ENCODE measurements at regions of chr6 and their contacts with region 1.

Region 1: DNA sequence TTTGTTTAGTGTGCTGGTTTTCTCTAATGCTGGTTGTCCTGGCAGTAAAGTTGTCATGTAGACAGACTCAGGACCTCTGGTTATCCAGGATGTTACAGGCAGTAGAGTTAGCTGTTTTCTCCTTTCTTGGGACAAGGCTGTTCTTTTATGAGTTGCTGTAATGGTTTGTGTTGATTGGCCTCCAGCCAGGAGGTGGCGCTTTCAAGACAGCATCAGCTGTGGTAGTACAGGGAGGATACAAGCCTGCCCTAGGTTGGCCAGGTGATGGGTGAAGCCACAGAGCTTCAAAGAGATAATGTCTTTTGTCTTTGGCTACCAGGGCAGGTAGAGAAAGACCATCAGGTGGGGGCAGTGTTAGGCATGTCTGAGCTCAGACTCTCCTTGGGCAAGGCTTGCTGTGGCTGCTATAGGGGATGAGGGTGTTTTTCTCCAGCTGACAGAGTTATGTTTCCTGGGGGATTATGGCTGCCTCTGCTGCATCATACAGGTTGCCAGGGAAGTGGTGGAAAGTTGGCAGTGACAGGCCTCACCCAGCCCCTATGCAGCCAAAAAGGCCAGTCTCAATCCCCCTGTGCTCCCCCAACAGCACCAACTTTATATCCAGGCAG is 127.2 kb upstream of the TAB2 start:
- DNase-seq: no peak
- ATAC-seq: peak; percentile 95
- H3K4me3 ChIP-seq: no peak overlapping the region
- H3K27ac ChIP-seq: no peak overlapping the region
- H3K4me1 ChIP-seq: peaks cover 5% of the 10 kb centered on the region
- H3K27me3 ChIP-seq: no peaks in the 10 kb centered on the region
- CTCF ChIP-seq: peak; percentile 39 to 57 (median 51)
- EP300 ChIP-seq: no peak
- POLR2A ChIP-seq: no peak
- RAD21 ChIP-seq: peak; percentile 61

Region 2: DNA sequence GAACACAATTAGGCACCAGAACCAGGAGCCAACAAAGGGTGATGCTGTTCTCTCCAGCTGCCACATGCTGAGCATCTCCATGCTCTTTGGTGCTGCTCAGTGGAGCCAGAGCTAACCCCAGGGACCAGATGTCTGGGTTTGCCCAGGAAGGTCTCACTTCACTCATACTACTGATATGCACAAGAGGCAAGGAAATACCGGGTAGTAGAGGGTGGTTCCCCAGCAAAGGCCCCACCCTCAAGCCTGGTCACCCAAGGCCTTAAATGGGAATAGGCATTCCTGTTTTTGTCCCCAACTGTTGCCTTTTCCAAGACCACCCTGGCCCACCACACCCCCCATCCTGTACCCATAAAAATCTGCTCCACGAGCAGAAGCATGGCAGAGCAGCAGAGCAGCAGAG is 77.4 kb before region 1 on chr6:
- CTCF ChIA-PET with region 1: interaction called, 6 read pairs
- POLR2A ChIA-PET with region 1: no interaction called
- RAD21 ChIA-PET with region 1: interaction called, 8 read pairs
- SMC1A ChIA-PET with region 1: interaction called, 10 read pairs
- in situ Hi-C with region 1: no loop called
- intact Hi-C with region 1: no loop called
- DNase-seq: no peak
- ATAC-seq: peak; percentile 82
- H3K4me3 ChIP-seq: no peak overlapping the region
- H3K27ac ChIP-seq: peak overlapping the region; percentile 74
- H3K4me1 ChIP-seq: peaks cover 50% of the 10 kb centered on the region
- H3K27me3 ChIP-seq: no peaks in the 10 kb centered on the region
- CTCF ChIP-seq: no peak
- EP300 ChIP-seq: no peak
- POLR2A ChIP-seq: no peak
- RAD21 ChIP-seq: no peak

Region 3: DNA sequence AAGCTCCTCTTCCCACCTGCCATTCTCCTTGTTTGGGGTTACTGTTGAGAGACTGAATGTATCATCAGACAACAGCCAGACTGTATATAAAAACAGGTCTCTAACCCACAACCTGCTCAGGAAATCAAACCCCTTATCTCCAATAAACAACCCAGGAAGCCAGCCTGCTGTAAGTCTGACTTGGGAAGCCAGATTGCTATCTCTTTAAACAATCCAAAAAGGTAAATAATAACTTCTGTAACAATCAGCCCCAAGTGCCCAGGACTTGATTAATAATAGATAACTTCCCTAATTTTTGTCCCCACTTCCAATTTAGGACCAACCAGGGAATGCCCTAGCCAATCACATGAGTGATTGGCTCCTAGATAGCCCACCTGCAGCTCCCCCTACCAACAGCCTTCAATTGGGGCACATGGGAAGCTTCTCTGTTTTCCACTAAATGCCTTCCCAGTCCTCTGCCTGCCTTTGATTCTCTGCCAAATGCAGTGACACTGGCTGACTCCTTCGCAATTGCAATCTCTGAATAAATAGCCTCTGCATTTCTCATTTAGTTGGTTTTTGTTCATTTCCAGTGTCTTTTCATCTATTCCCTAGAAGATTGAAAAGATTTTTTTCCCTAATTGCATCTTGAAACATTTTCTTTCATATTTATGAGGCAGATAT is 10.1 kb after region 1 on chr6:
- CTCF ChIA-PET with region 1: interaction called, 12 read pairs
- POLR2A ChIA-PET with region 1: no interaction called
- RAD21 ChIA-PET with region 1: interaction called, 3 read pairs
- SMC1A ChIA-PET with region 1: interaction called, 9 read pairs
- in situ Hi-C with region 1: no loop called
- intact Hi-C with region 1: no loop called
- DNase-seq: no peak
- ATAC-seq: no peak
- H3K4me3 ChIP-seq: no peak overlapping the region
- H3K27ac ChIP-seq: no peak overlapping the region
- H3K4me1 ChIP-seq: no peaks in the 10 kb centered on the region
- H3K27me3 ChIP-seq: no peaks in the 10 kb centered on the region
- CTCF ChIP-seq: no peak
- EP300 ChIP-seq: no peak
- POLR2A ChIP-seq: no peak
- RAD21 ChIP-seq: no peak

Region 4: GRCh38 chr6:149235130-149235561 is 44.8 kb after region 1 on chr6:
- CTCF ChIA-PET with region 1: interaction called, 3 read pairs
- POLR2A ChIA-PET with region 1: no interaction called
- RAD21 ChIA-PET with region 1: interaction called, 10 read pairs
- SMC1A ChIA-PET with region 1: interaction called, 12 read pairs
- in situ Hi-C with region 1: no loop called
- intact Hi-C with region 1: no loop called
- DNase-seq: peak; percentile 69
- ATAC-seq: peak; percentile 91
- H3K4me3 ChIP-seq: no peak overlapping the region
- H3K27ac ChIP-seq: peak overlapping the region; percentile 73
- H3K4me1 ChIP-seq: peaks cover 37% of the 10 kb centered on the region
- H3K27me3 ChIP-seq: no peaks in the 10 kb centered on the region
- CTCF ChIP-seq: no peak
- EP300 ChIP-seq: peak; percentile 37 to 71; a peak in 2 of 4 replicates
- POLR2A ChIP-seq: no peak
- RAD21 ChIP-seq: no peak

Region 5: DNA sequence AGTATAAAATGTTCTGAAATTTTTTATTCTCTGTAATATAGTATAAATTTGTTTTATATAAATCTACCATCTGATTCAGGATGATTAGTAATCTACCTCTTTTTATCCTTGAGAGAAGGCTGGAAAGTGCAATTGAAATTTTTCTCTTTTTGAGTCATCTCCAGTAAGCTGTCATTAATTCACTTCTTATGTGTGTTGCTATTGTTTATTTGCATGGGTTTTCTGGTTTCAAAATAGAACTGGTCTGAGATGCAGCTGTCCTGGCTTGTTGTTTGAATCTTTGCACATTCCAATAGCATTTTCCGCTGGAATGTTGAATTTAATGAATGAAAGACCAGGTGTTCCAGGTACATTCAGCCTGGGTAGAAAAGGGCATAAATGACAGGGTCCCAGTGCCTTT is 102.9 kb after region 1 on chr6:
- CTCF ChIA-PET with region 1: interaction called, 3 read pairs
- POLR2A ChIA-PET with region 1: no interaction called
- RAD21 ChIA-PET with region 1: no interaction called
- SMC1A ChIA-PET with region 1: interaction called, 13 read pairs
- in situ Hi-C with region 1: no loop called
- intact Hi-C with region 1: no loop called
- DNase-seq: no peak
- ATAC-seq: peak; percentile 65; the same call in 2 of the 3 replicates
- H3K4me3 ChIP-seq: no peak overlapping the region
- H3K27ac ChIP-seq: no peak overlapping the region
- H3K4me1 ChIP-seq: no peaks in the 10 kb centered on the region
- H3K27me3 ChIP-seq: no peaks in the 10 kb centered on the region
- CTCF ChIP-seq: no peak
- EP300 ChIP-seq: no peak
- POLR2A ChIP-seq: no peak
- RAD21 ChIP-seq: no peak

Region 6: DNA sequence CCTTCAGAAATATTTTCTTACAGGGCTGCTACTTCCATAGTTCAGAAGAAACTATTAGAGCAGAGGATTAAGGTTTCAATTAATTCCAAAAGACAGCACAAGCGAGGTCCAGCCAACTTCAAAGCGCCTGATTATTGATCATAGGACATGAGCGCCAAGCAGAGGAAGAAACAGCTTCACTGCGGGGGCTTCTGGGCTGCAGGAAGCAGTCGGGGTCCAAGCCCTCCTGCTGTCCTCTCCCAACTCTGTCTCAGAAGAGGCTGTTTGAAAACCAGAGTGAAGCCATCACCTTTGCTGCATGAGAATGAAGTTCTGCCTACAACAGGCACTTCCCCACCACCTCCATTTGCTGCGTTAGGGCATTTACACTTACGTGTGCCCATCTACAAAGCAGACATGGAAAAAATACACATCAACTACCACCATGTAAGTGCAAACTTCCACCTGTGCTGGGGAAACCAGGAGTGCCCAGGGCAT is 233.7 kb after region 1 on chr6:
- CTCF ChIA-PET with region 1: interaction called, 14 read pairs
- POLR2A ChIA-PET with region 1: no interaction called
- RAD21 ChIA-PET with region 1: interaction called, 8 read pairs
- SMC1A ChIA-PET with region 1: interaction called, 18 read pairs
- in situ Hi-C with region 1: no loop called
- intact Hi-C with region 1: no loop called
- DNase-seq: no peak
- ATAC-seq: no peak
- H3K4me3 ChIP-seq: no peak overlapping the region
- H3K27ac ChIP-seq: no peak overlapping the region
- H3K4me1 ChIP-seq: peaks cover 11% of the 10 kb centered on the region
- H3K27me3 ChIP-seq: no peaks in the 10 kb centered on the region; a peak in 1 of 4 replicates
- CTCF ChIP-seq: no peak
- EP300 ChIP-seq: no peak
- POLR2A ChIP-seq: no peak
- RAD21 ChIP-seq: no peak

Region 7: DNA sequence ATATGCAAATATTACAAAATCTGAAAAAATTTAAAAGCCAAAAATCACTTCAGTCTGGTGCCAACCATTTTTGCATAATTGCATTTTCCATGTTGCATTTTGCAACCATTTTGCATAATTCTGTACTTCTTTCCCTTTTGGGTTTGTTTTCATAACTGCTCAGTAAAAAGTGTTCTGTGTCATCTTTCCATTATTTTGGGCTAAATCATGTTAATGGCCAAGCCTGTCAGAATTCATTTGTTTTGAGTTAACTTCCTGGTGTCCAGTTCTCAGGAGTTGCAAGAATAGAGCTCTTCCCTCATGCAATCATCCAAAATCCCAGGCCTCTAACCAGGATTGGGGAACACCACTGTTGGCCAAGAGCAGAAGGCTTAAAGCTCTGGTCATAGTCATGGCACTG is 1808.8 kb after region 1 on chr6:
- CTCF ChIA-PET with region 1: no interaction called
- POLR2A ChIA-PET with region 1: no interaction called
- RAD21 ChIA-PET with region 1: no interaction called
- SMC1A ChIA-PET with region 1: no interaction called
- in situ Hi-C with region 1: no loop called
- intact Hi-C with region 1: no loop called
- DNase-seq: no peak
- ATAC-seq: no peak
- H3K4me3 ChIP-seq: no peak overlapping the region
- H3K27ac ChIP-seq: no peak overlapping the region
- H3K4me1 ChIP-seq: peaks cover 14% of the 10 kb centered on the region
- H3K27me3 ChIP-seq: no peaks in the 10 kb centered on the region
- CTCF ChIP-seq: no peak
- EP300 ChIP-seq: no peak
- POLR2A ChIP-seq: no peak
- RAD21 ChIP-seq: no peak